PC-3 (cell line): ENCODE measurements at regions of chr3 and their contacts with region 1.

Region 1: DNA sequence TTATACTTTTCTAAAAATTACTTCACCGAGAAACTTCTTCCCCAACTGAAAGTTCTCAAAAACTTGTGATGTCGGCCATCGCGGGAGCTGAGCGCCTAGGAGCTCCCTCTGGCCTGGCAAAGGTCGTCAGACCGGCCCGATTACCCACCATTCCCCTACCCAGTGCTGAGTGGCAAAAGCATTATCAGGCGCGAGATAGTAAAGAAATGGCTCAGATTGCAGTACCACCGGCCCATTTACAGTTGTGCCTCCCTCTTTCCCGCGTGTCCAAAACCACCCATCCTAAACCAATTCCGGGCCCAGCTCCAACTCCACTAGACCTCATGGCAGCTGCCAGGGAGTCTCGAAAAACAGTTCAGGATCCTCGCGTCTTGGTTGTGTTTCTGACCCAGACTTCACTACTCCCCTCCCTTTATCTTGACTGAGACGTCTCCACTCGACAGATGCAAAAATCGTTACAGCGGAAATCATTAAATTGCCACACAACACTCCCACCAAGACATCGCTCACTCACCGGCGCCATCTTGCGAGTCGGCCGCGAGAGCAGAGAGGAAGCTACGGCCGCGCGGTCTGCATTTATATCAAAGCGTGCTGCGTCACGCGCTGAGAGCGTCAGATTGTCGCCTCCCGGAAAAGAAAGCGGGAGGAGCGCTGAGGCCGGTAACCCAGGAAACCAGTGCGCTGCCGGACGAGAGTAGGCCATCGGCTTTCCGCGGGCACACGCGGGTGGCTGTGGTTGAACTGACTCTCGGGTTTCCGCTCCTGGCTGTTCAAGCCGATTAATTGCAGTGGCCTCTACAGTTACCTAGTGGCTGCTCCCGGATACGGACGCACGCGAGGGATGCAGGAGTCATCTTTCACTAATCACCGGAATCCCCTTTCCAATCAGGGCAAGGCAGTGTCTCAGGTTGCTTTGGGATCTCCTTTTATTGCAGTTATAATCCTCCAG is at the start of gene RPL22L1:
- DNase-seq: peak; percentile 98
- ATAC-seq: peak; percentile 95
- H3K4me3 ChIP-seq: peak within 1 kb of the TSS; percentile 93
- H3K27ac ChIP-seq: peak within 1 kb of the TSS; percentile 71
- H3K4me1 ChIP-seq: peaks cover 20% of the 10 kb centered on the region
- H3K27me3 ChIP-seq: no peaks in the 10 kb centered on the region
- CTCF ChIP-seq: no peak; the same call in 1 of the 2 replicates
- total RNA-seq, gene RPL22L1: 40.0 and 44.9 TPM in 2 replicates

Region 2: DNA sequence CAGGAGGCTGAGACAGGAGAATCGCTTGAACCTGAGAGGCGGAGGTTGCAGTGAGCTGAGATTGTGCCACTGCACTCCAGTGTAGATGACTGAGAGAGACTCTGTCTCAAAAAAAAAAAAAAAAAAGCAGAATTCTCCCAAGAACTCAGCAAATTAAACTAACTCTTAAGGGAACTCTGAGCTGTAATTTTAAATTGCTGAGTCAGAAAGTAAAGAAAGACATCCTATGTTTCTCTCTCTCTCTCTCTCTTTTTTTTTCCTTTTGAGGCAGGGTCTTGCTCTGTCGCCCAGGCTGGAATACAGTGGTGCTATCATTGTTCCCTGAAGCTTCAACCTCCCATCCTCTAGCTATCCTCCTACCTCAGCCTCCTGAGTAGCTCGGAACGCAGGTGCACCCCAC is 668.4 kb before region 1 on chr3:
- CTCF ChIA-PET with region 1: no interaction called
- POLR2A ChIA-PET with region 1: interaction called, 16 read pairs
- intact Hi-C with region 1: no loop called
- DNase-seq: no peak
- ATAC-seq: no peak
- H3K4me3 ChIP-seq: no peak overlapping the region
- H3K27ac ChIP-seq: no peak overlapping the region
- H3K4me1 ChIP-seq: peaks cover 8% of the 10 kb centered on the region; the same call in 1 of the 2 replicates
- H3K27me3 ChIP-seq: no peaks in the 10 kb centered on the region
- CTCF ChIP-seq: no peak

Region 3: DNA sequence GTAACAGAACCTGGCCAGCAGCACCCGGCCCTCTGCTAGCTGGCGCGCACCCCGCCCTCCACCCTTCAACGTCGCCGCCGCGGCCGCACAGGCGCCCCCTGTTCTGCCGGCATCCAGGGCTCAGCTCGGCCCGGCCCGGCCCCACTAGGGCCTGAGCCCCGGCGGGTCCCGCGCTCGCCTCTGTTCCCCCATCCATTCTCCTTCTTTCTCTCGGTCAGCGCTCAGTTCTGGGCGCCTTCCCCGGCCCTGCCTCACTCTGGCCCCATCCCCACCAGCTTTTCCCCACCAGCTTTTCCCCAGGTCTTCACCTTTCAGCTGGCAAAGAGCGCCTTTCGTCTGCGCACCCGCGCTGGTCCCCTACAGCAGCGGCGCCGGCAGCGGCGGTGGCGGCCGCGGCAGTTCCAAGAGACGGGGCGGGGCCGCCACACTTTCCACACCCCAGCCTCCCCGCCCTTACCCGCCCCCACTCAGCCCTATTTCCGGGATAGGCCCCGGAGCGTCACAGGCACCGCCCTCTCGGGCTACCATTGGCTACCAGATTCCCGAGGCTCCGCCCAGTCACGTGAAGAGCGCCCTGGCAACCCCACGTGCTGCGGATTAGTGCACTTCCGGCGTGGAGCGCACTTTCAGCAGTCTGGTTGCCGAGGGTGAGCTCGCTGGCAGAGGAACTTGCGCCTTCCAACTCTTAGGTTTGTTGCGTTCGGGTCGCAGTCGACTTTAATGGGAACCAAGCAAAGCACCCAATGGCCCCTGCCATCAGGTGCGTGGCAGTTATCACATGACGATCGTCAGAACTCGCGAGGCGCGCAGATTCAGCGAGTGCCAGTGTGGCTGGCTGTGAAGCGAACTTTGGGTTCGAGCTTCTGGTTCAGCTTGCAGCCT is 38.6 kb after region 1 on chr3 and contains the start of gene EIF5A2:
- CTCF ChIA-PET with region 1: no interaction called
- POLR2A ChIA-PET with region 1: interaction called, 6 read pairs
- intact Hi-C with region 1: loop called (anchors 5 kb)
- DNase-seq: peak; percentile 91
- ATAC-seq: peak; percentile 88
- H3K4me3 ChIP-seq: peak within 1 kb of the TSS; percentile 92
- H3K27ac ChIP-seq: peak within 1 kb of the TSS; percentile 61
- H3K4me1 ChIP-seq: peaks cover 32% of the 10 kb centered on the region
- H3K27me3 ChIP-seq: no peaks in the 10 kb centered on the region
- CTCF ChIP-seq: no peak
- total RNA-seq, gene EIF5A2: 10.7 and 11.1 TPM in 2 replicates